ENCODE measurements at regions of chr13 and their contacts with region 1.

Region 1: GRCh38 chr13:36736119-36736726 is 62.4 kb downstream of the SERTM1 start:
- DNase-seq: peak; percentile 62
- H3K4me3 Mint-ChIP-seq: no peak overlapping the region
- H3K27ac Mint-ChIP-seq: no peak overlapping the region
- H3K4me1 Mint-ChIP-seq: no peaks in the 10 kb centered on the region
- H3K27me3 Mint-ChIP-seq: no peaks in the 10 kb centered on the region
- CTCF ChIP-seq: peak; percentile 69

Region 2: DNA sequence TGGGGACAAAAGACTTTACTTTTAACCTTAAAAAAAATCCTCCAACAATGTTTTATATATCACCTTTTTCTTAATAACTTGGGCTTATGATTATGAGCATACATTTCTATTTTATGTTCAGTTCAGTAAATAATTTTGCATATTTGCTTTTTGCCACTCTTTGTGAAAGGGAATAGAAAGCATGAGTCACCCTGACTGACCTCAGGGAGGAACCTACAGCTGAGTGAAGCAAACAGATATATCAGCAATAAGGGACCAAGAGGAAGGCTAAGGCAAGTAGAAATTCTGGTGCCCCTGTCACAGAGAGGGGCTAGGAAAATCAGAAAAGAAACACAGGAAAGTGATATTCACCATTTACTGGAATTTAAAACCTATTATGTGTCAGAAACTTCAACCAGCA is 484.7 kb before region 1 on chr13:
- CTCF ChIA-PET with region 1: no interaction called
- POLR2A ChIA-PET with region 1: no interaction called
- intact Hi-C with region 1: no loop called
- DNase-seq: no peak
- H3K4me3 Mint-ChIP-seq: no peak overlapping the region
- H3K27ac Mint-ChIP-seq: no peak overlapping the region
- H3K4me1 Mint-ChIP-seq: no peaks in the 10 kb centered on the region
- H3K27me3 Mint-ChIP-seq: no peaks in the 10 kb centered on the region
- CTCF ChIP-seq: no peak

Region 3: GRCh38 chr13:36453516-36453915 is 282.7 kb before region 1 on chr13:
- CTCF ChIA-PET with region 1: interaction called, 78 read pairs
- POLR2A ChIA-PET with region 1: interaction called, 10 read pairs
- intact Hi-C with region 1: loop called (anchors 1 kb)
- DNase-seq: peak; percentile 39
- H3K4me3 Mint-ChIP-seq: no peak overlapping the region
- H3K27ac Mint-ChIP-seq: no peak overlapping the region
- H3K4me1 Mint-ChIP-seq: no peaks in the 10 kb centered on the region
- H3K27me3 Mint-ChIP-seq: no peaks in the 10 kb centered on the region
- CTCF ChIP-seq: no peak

Region 4: DNA sequence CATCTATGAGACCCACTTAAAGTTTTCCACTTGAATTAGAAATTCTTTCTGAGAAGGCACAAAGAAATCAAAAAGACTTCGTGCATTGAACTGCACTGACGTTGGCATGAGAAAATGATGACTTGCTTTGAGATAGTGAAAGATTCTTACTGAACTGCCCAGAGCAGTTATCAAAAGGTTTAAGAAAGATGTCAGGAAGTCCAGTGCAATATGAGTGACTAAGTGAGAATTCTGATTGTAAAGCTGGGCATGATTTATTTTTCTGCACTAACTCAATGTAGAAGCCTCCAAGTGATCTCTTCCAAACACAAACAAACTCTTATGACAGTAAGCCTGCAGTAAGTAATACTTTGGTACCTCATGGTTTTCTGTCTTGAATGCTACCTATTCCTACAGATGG is 10.3 kb before region 1 on chr13:
- CTCF ChIA-PET with region 1: interaction called, 12 read pairs
- POLR2A ChIA-PET with region 1: interaction called, 3 read pairs
- intact Hi-C with region 1: no loop called
- DNase-seq: no peak
- H3K4me3 Mint-ChIP-seq: no peak overlapping the region
- H3K27ac Mint-ChIP-seq: no peak overlapping the region
- H3K4me1 Mint-ChIP-seq: peaks cover 4% of the 10 kb centered on the region
- H3K27me3 Mint-ChIP-seq: peaks cover 18% of the 10 kb centered on the region
- CTCF ChIP-seq: no peak